H1 (cell line): ENCODE measurements at regions of chr1 and their contacts with region 1.

Region 1: DNA sequence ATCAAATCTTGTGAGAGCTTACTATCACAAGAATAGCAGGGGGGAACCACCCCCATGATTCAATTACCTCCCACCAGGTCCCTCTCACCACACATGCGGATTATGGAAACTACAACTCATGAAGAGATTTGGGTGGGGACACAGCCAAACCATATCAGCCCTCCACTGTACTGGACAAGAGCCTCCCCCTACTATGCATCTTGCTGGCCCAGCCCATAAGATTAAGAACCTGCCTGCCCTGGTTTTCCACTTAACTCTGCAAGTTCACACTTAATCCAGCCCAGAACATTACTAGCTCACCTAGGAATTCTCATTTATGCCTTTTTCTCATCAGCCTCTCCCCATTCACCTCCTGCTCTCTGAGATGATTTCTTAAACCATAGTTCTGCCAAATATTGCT is 18.0 kb upstream of the FBXO28 start:
- DNase-seq: no peak
- H3K4me3 ChIP-seq: no peak overlapping the region
- H3K27ac ChIP-seq: no peak overlapping the region
- H3K4me1 ChIP-seq: no peaks in the 10 kb centered on the region
- H3K27me3 ChIP-seq: no peaks in the 10 kb centered on the region
- CTCF ChIP-seq: no peak
- EP300 ChIP-seq: no peak
- POLR2A ChIP-seq: no peak
- RAD21 ChIP-seq: no peak

Region 2: GRCh38 chr1:224042557-224043118 is 53.2 kb before region 1 on chr1:
- CTCF ChIA-PET with region 1: no interaction called
- POLR2A ChIA-PET with region 1: no interaction called
- DNase-seq: no peak
- H3K4me3 ChIP-seq: no peak overlapping the region
- H3K27ac ChIP-seq: no peak overlapping the region
- H3K4me1 ChIP-seq: no peaks in the 10 kb centered on the region
- H3K27me3 ChIP-seq: no peaks in the 10 kb centered on the region
- CTCF ChIP-seq: no peak
- EP300 ChIP-seq: no peak
- POLR2A ChIP-seq: no peak
- RAD21 ChIP-seq: no peak

Region 3: GRCh38 chr1:224106568-224107281 is 10.9 kb after region 1 on chr1:
- CTCF ChIA-PET with region 1: interaction called, 10 read pairs
- POLR2A ChIA-PET with region 1: interaction called, 4 read pairs
- DNase-seq: peak in 1 of 2 experiments; percentile 45
- H3K4me3 ChIP-seq: no peak overlapping the region
- H3K27ac ChIP-seq: no peak overlapping the region
- H3K4me1 ChIP-seq: 0 out of 7 replicates have a peak, but pooled peaks cover 0 to 4% (median 0%) of the 10 kb centered on the region in 4 experiments
- H3K27me3 ChIP-seq: no peaks in the 10 kb centered on the region
- CTCF ChIP-seq: peak; percentile 35 to 69 (median 67)
- EP300 ChIP-seq: no peak
- POLR2A ChIP-seq: 0 out of 3 replicates have a peak, but pooled peaks of 1 of the 2 experiments have one; percentile 25
- RAD21 ChIP-seq: peak; percentile 68 to 75

Region 4: GRCh38 chr1:224127925-224128819 is 32.3 kb after region 1 on chr1:
- CTCF ChIA-PET with region 1: no interaction called
- POLR2A ChIA-PET with region 1: no interaction called
- DNase-seq: no peak
- H3K4me3 ChIP-seq: no peak overlapping the region
- H3K27ac ChIP-seq: no peak overlapping the region
- H3K4me1 ChIP-seq: no peaks in the 10 kb centered on the region; a peak in 1 of 7 replicates
- H3K27me3 ChIP-seq: no peaks in the 10 kb centered on the region
- CTCF ChIP-seq: no peak
- EP300 ChIP-seq: no peak
- POLR2A ChIP-seq: no peak
- RAD21 ChIP-seq: no peak